ENCODE measurements at regions of chr3 and their contacts with region 1.

Region 1: DNA sequence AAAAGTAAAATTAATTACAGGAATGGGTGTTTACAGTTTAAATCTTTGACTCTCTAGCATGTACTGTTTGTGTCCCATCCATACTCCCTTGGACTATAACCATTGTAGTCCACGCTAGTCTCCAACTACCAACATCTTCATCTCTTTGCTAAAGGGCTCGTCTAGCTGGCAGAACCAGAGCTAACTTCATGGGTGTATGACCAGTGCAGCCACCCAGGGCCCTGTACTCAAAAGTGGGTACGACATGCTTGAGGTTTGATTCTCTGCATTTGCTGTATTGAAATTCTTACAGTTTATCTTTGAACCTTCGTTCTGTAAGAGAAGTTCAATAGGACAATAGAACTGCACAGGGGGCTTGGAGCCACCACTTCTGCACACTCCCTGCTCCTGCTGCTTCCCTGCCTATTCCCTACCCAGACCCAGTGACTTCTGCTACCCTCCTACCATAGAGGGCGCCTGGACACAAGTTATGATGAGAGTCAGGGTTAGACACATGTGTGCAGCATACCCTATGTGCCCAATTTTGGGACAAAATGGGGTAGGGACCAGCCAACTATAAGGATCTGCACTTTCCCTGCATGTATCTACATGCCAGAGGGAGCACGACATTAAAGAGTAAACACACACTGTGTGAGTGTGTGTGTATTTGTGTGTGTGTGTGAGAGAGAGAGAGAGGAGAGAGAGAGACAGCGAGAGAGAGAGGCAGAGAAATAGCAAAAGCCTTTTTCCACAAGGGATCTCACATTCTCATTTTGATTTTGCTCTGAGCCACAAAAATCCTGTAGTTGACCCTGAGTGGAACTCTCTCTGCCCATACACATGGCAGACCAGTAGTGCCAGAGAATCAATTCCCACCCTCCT is 59.0 kb upstream of the NECTIN3 start:
- DNase-seq: peak; percentile 31
- H3K4me3 ChIP-seq: no peak overlapping the region
- H3K27ac ChIP-seq: no peak overlapping the region
- H3K4me1 ChIP-seq: no peaks in the 10 kb centered on the region
- H3K27me3 ChIP-seq: peaks cover 1% of the 10 kb centered on the region
- CTCF ChIP-seq: peak in 1 of 2 donors; percentile 48

Region 2: GRCh38 chr3:111539351-111540331 is 527.0 kb after region 1 on chr3:
- CTCF ChIA-PET with region 1: no interaction called
- dilution Hi-C with region 1: no loop called
- in situ Hi-C with region 1: no loop called
- intact Hi-C with region 1: loop called (anchors 2 kb)
- DNase-seq: peak; percentile 55
- H3K4me3 ChIP-seq: no peak overlapping the region
- H3K27ac ChIP-seq: no peak overlapping the region
- H3K4me1 ChIP-seq: peaks cover 21% of the 10 kb centered on the region
- H3K27me3 ChIP-seq: no peaks in the 10 kb centered on the region
- CTCF ChIP-seq: peak; percentile 92 to 94

Region 3: GRCh38 chr3:112086076-112086854 is 1073.6 kb after region 1 on chr3 and contains the start of gene C3orf52:
- CTCF ChIA-PET with region 1: no interaction called
- dilution Hi-C with region 1: no loop called
- in situ Hi-C with region 1: no loop called
- intact Hi-C with region 1: no loop called
- DNase-seq: peak; percentile 91
- H3K4me3 ChIP-seq: peak within 1 kb of the TSS; percentile 72 to 89 (median 84)
- H3K27ac ChIP-seq: peak within 1 kb of the TSS; percentile 96
- H3K4me1 ChIP-seq: peaks cover 19% of the 10 kb centered on the region
- H3K27me3 ChIP-seq: no peaks in the 10 kb centered on the region
- CTCF ChIP-seq: peak in 1 of 2 donors; percentile 18
- total RNA-seq, gene C3orf52: 15.4 to 16.8 TPM

Measured in mammary epithelial cell (primary cell).